CD4-positive, alpha-beta T cell (primary cell): ENCODE measurements at regions of chr5 and their contacts with region 1.

Region 1: GRCh38 chr5:132426525-132427138 is 57.1 kb downstream of the SLC22A5 start:
- DNase-seq: peak; percentile 20 to 88 (median 52)
- ATAC-seq: peak; percentile 32
- H3K4me3 ChIP-seq: peak overlapping the region; percentile 13
- H3K4me3 Mint-ChIP-seq: peak overlapping the region; percentile 77
- H3K27ac ChIP-seq: peak overlapping the region; percentile 78 to 85
- H3K27ac Mint-ChIP-seq: peak overlapping the region; percentile 93
- H3K4me1 ChIP-seq: peaks cover 99% of the 10 kb centered on the region
- H3K4me1 Mint-ChIP-seq: peaks cover 97% of the 10 kb centered on the region
- H3K27me3 ChIP-seq: no peaks in the 10 kb centered on the region
- H3K27me3 Mint-ChIP-seq: no peaks in the 10 kb centered on the region
- CTCF ChIP-seq: no peak

Region 2: GRCh38 chr5:132437604-132438266 is 11.1 kb after region 1 on chr5:
- CTCF ChIA-PET with region 1: interaction called, 8 read pairs
- POLR2A ChIA-PET with region 1: interaction called, 29 read pairs
- intact Hi-C with region 1: loop called in 1 of 2 experiments (anchors 2 kb)
- DNase-seq: peak; percentile 25 to 87 (median 62)
- ATAC-seq: peak; percentile 96
- H3K4me3 ChIP-seq: peak overlapping the region; percentile 21
- H3K4me3 Mint-ChIP-seq: peak overlapping the region; percentile 42
- H3K27ac ChIP-seq: peak overlapping the region; percentile 67 to 72
- H3K27ac Mint-ChIP-seq: peak overlapping the region; percentile 90
- H3K4me1 ChIP-seq: peaks cover 87% of the 10 kb centered on the region
- H3K4me1 Mint-ChIP-seq: peaks cover 89% of the 10 kb centered on the region
- H3K27me3 ChIP-seq: no peaks in the 10 kb centered on the region
- H3K27me3 Mint-ChIP-seq: no peaks in the 10 kb centered on the region
- CTCF ChIP-seq: no peak

Region 3: DNA sequence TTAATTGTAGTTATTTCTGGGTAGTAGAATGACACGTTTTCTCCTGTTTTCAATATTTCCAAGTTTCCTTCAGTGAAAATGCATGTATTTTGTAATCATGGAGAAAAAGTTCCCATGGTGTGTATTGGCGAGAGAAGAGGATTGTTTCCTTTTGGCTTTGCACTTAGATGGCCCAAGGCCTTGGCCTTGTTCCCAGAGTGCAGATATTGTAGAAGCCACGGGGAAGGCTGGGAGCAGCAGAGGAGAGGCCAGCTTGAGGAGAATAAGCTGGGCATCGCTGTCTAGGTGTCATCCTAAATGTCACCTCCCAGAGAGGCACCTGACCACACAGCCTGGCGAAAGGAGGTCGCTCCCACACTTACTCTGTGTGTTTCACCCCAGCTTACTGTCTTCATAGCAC is 20.0 kb after region 1 on chr5:
- CTCF ChIA-PET with region 1: interaction called, 10 read pairs
- POLR2A ChIA-PET with region 1: interaction called, 8 read pairs
- intact Hi-C with region 1: no loop called
- DNase-seq: no peak
- ATAC-seq: no peak
- H3K4me3 ChIP-seq: peak overlapping the region; percentile 19
- H3K4me3 Mint-ChIP-seq: peak overlapping the region; percentile 39
- H3K27ac ChIP-seq: peak overlapping the region in 1 of 2 donors; percentile 23
- H3K27ac Mint-ChIP-seq: peak overlapping the region; percentile 82
- H3K4me1 ChIP-seq: peaks cover 74% of the 10 kb centered on the region
- H3K4me1 Mint-ChIP-seq: peaks cover 67% of the 10 kb centered on the region
- H3K27me3 ChIP-seq: no peaks in the 10 kb centered on the region
- H3K27me3 Mint-ChIP-seq: no peaks in the 10 kb centered on the region
- CTCF ChIP-seq: no peak

Region 4: DNA sequence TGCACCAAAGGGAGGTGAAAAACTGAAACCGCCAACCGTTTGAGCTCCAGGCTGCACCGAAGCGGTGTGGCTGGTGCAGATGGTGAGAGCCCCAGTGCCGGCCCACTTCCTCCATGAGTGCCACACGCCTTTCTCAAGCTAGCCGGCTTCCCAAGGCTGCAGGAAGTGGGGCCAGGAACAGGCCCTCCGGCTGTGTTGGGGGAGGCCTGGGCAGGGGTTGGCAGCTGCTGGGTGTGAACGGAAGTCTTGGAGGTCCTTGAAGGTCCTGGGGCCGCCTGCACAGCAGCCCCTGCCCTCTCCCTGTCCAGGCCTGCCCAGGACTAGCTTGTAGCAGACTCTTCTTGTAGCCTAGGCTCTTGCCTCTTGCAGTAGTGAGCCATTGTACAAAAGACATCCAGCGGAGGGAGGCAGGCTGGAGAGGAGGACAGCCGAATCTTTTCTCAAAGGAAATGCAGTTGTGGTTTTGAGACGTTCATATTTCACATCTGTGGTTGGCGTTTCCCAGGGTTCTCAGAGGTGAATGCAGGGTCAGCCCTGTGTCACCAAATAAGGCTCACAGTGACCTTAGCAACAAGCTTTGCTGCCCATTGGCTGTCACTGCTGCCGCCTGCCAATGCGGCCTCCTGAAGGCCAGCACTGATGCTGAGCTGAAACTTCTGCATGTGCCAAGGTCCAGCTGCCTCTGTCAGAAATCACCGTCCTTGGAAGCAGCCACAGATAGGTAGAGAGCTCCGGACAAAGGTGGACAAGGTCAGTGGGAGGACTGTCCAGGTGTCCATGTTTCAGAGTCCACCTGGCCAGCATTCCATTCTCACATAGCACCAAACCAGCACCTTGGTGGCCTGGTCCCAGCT is 40.0 kb after region 1 on chr5:
- CTCF ChIA-PET with region 1: interaction called, 7 read pairs
- POLR2A ChIA-PET with region 1: interaction called, 645 read pairs
- intact Hi-C with region 1: loop called (anchors 2 to 5 kb)
- DNase-seq: peak in 13 of 14 experiments; percentile 56 to 90 (median 66)
- ATAC-seq: peak; percentile 63
- H3K4me3 ChIP-seq: peak overlapping the region; percentile 34
- H3K4me3 Mint-ChIP-seq: peak overlapping the region; percentile 85
- H3K27ac ChIP-seq: peak overlapping the region; percentile 69 to 73
- H3K27ac Mint-ChIP-seq: peak overlapping the region; percentile 97
- H3K4me1 ChIP-seq: peaks cover 88% of the 10 kb centered on the region
- H3K4me1 Mint-ChIP-seq: peaks cover 99% of the 10 kb centered on the region
- H3K27me3 ChIP-seq: no peaks in the 10 kb centered on the region
- H3K27me3 Mint-ChIP-seq: no peaks in the 10 kb centered on the region
- CTCF ChIP-seq: no peak

Region 5: DNA sequence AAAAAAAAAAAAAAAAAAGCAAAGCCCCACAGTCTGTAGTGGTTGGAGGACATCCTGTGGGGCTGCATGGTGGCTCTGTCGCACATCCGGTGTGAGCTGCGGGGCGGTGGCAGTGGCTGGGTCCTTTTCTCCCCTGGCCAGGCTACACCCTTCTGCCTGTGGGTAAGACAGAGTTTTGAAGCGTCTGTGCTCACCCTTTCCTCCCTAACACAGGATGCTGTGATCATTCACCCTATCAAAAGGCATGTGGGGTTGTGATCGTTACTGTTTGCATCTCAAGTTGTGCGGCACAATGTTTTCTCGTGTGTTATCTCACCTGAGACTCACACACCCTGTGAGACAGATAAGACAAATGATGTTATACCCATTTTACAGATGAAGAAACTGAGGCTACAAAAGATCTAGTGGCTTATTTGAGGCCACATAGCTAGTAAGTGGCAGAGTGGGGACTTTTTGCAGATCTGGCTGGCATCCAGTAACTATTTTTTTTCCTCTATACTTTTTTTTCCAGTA is 46.4 kb after region 1 on chr5:
- CTCF ChIA-PET with region 1: no interaction called
- POLR2A ChIA-PET with region 1: interaction called, 645 read pairs
- intact Hi-C with region 1: loop called (anchors 2 to 5 kb)
- DNase-seq: peak; percentile 73 to 96 (median 81)
- ATAC-seq: peak; percentile 68
- H3K4me3 ChIP-seq: no peak overlapping the region
- H3K4me3 Mint-ChIP-seq: peak overlapping the region; percentile 74
- H3K27ac ChIP-seq: peak overlapping the region; percentile 70 to 77
- H3K27ac Mint-ChIP-seq: peak overlapping the region; percentile 97
- H3K4me1 ChIP-seq: peaks cover 92% of the 10 kb centered on the region
- H3K4me1 Mint-ChIP-seq: peaks cover 96% of the 10 kb centered on the region
- H3K27me3 ChIP-seq: no peaks in the 10 kb centered on the region
- H3K27me3 Mint-ChIP-seq: peaks cover 10% of the 10 kb centered on the region
- CTCF ChIP-seq: no peak